CD4-positive, alpha-beta memory T cell (primary cell): ENCODE measurements at regions of chr3 and their contacts with region 1.

Region 1: DNA sequence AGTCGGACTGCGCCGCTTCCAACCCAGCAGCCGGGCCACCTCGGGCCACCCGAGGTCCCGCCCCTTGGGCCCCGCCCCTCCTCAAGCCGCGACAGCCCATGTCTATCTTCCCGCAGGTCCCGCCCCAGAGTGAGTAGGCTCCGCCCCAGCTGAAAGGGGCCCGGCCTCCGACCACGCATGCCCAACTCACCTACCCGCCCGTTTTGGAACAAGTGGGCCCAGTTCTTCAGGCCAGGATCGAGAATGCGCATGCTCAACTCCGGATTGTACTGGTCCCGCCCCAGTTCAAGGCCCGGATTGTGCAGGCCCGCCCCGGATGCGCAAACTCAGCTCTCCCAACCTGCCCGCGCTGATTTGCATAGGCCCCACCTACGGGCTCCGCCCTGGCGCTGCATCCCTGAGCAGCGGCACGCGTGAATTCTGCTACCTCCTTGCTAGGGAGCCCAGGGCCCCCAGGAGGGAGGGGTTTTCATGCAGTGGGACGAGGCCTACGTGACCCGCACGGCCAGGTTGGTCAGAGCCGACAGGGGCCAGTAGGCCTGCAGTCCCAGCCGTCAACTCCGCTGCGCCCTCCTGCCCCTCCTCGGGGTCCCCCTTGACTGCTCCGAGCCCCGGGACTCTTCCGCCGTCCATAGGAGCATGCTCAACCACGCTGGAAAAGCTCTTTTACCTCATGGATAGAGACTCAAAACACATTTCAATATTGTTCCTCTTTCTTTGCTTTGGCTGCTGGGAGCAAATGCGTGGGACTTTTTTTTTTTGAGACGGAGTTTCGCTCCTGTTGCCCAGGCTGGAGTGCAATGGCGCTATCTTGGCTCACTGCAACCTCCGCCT is at the start of gene PFKFB4:
- DNase-seq: peak; percentile 99 to 100 (median 100)
- H3K4me3 ChIP-seq: peak within 1 kb of the TSS; percentile 69 to 82
- H3K4me3 Mint-ChIP-seq: peak within 1 kb of the TSS; percentile 77 to 96 (median 87)
- H3K27ac ChIP-seq: peak within 1 kb of the TSS; percentile 39
- H3K27ac Mint-ChIP-seq: peak within 1 kb of the TSS; percentile 66 to 89 (median 78)
- H3K4me1 ChIP-seq: peaks cover 23% of the 10 kb centered on the region
- H3K4me1 Mint-ChIP-seq: peaks cover 5 to 22% (median 17%) of the 10 kb centered on the region in 4 donors
- H3K27me3 ChIP-seq: no peaks in the 10 kb centered on the region
- H3K27me3 Mint-ChIP-seq: no peaks in the 10 kb centered on the region
- total RNA-seq, gene PFKFB4: 2.6 to 2.7 TPM

Region 2: DNA sequence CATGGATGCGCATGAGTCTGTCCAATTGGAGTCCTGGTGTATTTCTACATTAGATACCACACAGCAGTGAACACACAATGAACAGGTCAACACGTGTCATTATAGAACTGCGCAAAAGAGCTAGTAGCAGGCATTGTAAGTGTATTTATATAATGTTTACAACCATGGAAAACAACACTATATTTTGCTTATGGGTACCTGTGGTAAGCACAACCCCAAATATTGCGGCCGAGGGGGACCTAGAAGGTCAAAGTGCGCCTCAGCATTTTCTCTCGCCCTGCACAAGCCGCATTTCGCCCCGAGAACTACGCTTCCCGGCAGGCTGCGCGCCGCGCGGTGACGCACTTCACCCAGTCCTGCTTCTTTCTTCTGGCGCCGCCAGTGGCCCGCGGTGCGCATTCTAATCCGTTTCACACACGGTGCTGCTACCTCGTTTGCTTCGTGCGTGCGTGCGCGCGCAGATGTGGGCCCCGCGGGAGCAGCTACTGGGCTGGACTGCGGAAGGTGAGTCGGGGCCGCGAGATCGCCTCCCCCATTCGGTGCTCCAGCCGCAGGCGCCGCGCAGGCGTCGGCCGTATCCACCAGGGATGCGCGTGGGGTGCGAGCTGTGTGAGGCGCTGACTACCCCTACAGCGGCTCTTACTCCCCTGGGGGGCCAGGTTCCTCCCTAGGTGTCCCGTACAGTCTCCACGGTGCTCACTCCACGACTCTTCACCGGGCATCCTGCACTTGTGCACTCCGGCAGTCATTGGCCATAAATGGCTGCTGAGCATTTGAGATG is 316.1 kb before region 1 on chr3 and contains the start of gene ZNF589:
- CTCF ChIA-PET with region 1: no interaction called
- POLR2A ChIA-PET with region 1: interaction called, 4 read pairs
- intact Hi-C with region 1: loop called (anchors 2 kb)
- DNase-seq: peak; percentile 90 to 96 (median 94)
- H3K4me3 ChIP-seq: peak within 1 kb of the TSS; percentile 64 to 99
- H3K4me3 Mint-ChIP-seq: peak within 1 kb of the TSS; percentile 87 to 97 (median 92)
- H3K27ac ChIP-seq: peak within 1 kb of the TSS; percentile 69
- H3K27ac Mint-ChIP-seq: peak within 1 kb of the TSS; percentile 87 to 96 (median 92)
- H3K4me1 ChIP-seq: peaks cover 30% of the 10 kb centered on the region
- H3K4me1 Mint-ChIP-seq: peaks cover 8 to 26% (median 11%) of the 10 kb centered on the region in 4 donors
- H3K27me3 ChIP-seq: no peaks in the 10 kb centered on the region
- H3K27me3 Mint-ChIP-seq: no peaks in the 10 kb centered on the region
- total RNA-seq, gene ZNF589: 49.4 to 58.6 TPM

Region 3: DNA sequence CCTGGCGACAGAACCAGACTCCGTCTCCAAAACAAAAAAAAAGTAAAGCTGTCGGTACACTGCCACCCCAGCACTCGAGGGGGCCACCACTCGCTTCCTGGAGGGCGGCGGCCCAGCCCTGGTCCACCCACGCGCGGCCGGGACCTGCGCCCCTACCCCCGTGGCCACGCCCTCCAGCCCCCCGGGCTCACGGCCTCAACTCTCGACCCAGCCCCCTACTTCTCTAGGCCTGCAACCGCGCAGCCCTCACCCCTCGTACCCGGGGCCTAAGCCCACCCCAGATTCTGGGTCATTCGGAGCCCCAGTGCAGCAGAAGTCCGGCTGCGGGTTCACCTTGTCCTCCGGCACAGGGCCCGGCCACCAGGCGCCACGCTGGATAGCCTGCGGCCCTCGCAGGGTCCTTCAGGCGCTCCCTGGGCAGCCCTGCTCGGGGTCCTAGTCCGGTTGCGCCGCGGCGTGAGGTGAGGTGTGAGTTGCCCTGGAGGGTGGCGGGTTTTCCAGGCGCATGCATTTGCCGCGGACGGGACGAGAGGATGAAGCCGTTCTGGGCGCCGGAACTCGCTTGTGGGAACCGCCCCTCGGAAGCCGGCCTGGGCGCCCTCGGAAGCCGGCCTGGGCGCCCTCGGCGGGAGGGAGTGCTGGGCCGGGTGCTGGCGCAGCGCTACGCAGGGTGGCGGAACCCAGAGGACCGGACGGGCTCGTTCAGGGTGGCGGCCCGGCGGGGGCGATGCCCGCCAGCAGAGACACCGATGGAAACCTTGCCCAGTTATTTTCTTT is 255.8 kb before region 1 on chr3:
- CTCF ChIA-PET with region 1: no interaction called
- POLR2A ChIA-PET with region 1: no interaction called
- intact Hi-C with region 1: loop called (anchors 1 kb)
- DNase-seq: peak; percentile 83 to 89 (median 85)
- H3K4me3 ChIP-seq: peak within 1 kb of the TSS; percentile 86 to 89
- H3K4me3 Mint-ChIP-seq: peak within 1 kb of the TSS; percentile 91 to 96 (median 94)
- H3K27ac ChIP-seq: peak within 1 kb of the TSS; percentile 90
- H3K27ac Mint-ChIP-seq: peak within 1 kb of the TSS; percentile 78 to 99 (median 97)
- H3K4me1 ChIP-seq: peaks cover 20% of the 10 kb centered on the region
- H3K4me1 Mint-ChIP-seq: peaks cover 25 to 57% (median 32%) of the 10 kb centered on the region in 4 donors
- H3K27me3 ChIP-seq: no peaks in the 10 kb centered on the region
- H3K27me3 Mint-ChIP-seq: no peaks in the 10 kb centered on the region

Region 4: GRCh38 chr3:48507351-48508061 is 49.5 kb before region 1 on chr3:
- CTCF ChIA-PET with region 1: interaction called, 7 read pairs
- POLR2A ChIA-PET with region 1: interaction called, 13 read pairs
- intact Hi-C with region 1: no loop called
- DNase-seq: peak; percentile 75 to 84 (median 77)
- H3K4me3 ChIP-seq: no peak overlapping the region
- H3K4me3 Mint-ChIP-seq: peak overlapping the region in 7 of 8 donors; percentile 42 to 77 (median 64)
- H3K27ac ChIP-seq: peak overlapping the region; percentile 27
- H3K27ac Mint-ChIP-seq: peak overlapping the region; percentile 83 to 92 (median 86)
- H3K4me1 ChIP-seq: peaks cover 62% of the 10 kb centered on the region
- H3K4me1 Mint-ChIP-seq: peaks cover 36 to 62% (median 50%) of the 10 kb centered on the region in 4 donors
- H3K27me3 ChIP-seq: no peaks in the 10 kb centered on the region
- H3K27me3 Mint-ChIP-seq: no peaks in the 10 kb centered on the region

Region 5: GRCh38 chr3:48535578-48535977 is 21.4 kb before region 1 on chr3:
- CTCF ChIA-PET with region 1: no interaction called
- POLR2A ChIA-PET with region 1: no interaction called
- intact Hi-C with region 1: no loop called
- DNase-seq: no peak
- H3K4me3 ChIP-seq: no peak overlapping the region
- H3K4me3 Mint-ChIP-seq: no peak overlapping the region
- H3K27ac ChIP-seq: no peak overlapping the region
- H3K27ac Mint-ChIP-seq: peak overlapping the region in 1 of 7 donors; percentile 55
- H3K4me1 ChIP-seq: no peaks in the 10 kb centered on the region
- H3K4me1 Mint-ChIP-seq: peaks cover 0 to 7% (median 0%) of the 10 kb centered on the region in 4 donors
- H3K27me3 ChIP-seq: no peaks in the 10 kb centered on the region
- H3K27me3 Mint-ChIP-seq: no peaks in the 10 kb centered on the region

Region 6: DNA sequence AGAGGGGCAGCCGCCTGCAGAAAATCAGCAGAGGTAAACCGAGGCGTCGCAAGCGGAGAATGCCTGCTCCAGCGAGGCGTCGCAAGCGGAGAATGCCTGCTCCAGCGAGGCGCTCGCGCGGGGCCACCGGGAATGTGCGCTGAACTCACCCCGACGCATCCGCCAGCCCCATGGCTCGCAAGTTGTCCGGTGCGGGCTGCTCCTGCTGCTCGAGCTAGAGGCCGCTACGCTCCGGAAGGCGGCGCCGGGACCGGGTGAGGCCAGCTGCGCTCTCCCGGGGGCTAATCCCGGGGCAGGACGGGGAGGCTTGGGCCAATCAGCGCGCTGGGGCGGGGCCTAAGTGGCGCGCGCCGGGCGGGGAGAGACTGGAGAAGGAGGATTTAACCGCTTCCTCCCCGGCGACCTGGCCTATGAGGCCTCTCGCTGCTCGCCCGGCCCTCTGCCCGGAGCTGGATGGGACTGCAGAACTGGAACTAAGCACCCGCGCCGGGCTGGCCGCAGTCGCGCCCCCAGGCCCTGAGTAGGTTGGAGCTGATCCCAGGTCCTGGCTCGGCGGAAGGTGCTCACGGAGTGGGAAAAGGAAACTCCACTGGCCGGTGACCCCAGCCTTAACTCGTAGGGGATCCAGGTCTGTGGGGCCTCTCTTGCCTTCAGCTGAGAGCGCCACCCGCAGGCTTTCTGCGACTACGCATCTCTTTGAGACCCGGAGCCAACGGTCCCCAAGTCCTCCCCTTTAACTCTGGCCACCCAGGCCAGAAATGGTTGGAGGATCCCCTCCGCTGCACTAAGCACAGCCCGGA is 78.4 kb after region 1 on chr3 and contains the start of gene SLC26A6:
- CTCF ChIA-PET with region 1: interaction called, 3 read pairs
- POLR2A ChIA-PET with region 1: interaction called, 8 read pairs
- intact Hi-C with region 1: loop called (anchors 1 kb)
- DNase-seq: peak; percentile 86 to 92 (median 89)
- H3K4me3 ChIP-seq: peak within 1 kb of the TSS; percentile 57 to 91
- H3K4me3 Mint-ChIP-seq: peak within 1 kb of the TSS; percentile 86 to 92 (median 89)
- H3K27ac ChIP-seq: peak within 1 kb of the TSS; percentile 60
- H3K27ac Mint-ChIP-seq: peak within 1 kb of the TSS; percentile 58 to 87 (median 74)
- H3K4me1 ChIP-seq: peaks cover 18% of the 10 kb centered on the region
- H3K4me1 Mint-ChIP-seq: peaks cover 3 to 25% (median 15%) of the 10 kb centered on the region in 4 donors
- H3K27me3 ChIP-seq: no peaks in the 10 kb centered on the region
- H3K27me3 Mint-ChIP-seq: peaks cover 0 to under 1% of the 10 kb centered on the region in 2 donors
- total RNA-seq, gene SLC26A6: 31.6 to 32.4 TPM

Region 7: DNA sequence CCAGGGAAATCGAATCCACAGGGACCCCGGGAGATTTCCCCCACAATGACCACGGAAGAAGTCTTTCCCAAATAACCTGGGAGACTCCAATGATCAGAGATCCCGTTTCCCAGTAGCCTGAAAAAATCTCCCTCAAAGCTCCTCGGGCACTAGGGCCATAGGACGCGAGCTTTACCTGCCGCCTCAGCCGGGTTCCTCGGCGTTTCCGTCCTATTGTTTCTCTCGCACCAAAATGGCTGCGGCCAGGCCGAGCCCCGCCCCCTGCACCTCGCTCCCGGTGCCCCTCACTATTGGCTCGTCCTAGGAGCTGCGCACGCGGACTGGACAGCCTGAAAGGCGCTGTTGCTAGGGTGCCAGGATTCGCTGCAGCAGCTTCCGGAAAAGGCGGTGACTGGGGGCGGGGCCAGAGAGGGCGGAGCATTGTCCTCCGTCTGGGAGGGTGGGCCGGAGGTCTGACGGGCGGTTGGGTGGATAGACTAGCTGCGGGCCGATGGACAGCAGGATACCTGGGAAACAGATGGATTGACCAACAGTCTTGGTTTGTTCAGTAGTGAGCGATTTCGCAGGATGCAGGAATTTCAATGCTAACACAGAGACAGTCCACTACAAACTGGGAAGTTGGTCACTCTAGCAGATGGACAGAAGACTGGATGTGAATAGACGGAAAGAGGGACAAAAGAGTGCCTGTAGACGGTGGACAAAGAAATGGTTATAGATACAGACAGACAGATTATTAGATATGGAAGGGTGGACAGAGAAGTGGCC is 160.2 kb after region 1 on chr3 and contains the start of gene IP6K2:
- CTCF ChIA-PET with region 1: no interaction called
- POLR2A ChIA-PET with region 1: no interaction called
- intact Hi-C with region 1: loop called (anchors 1 kb)
- DNase-seq: peak; percentile 95 to 99 (median 97)
- H3K4me3 ChIP-seq: peak within 1 kb of the TSS; percentile 90 to 98
- H3K4me3 Mint-ChIP-seq: peak within 1 kb of the TSS; percentile 98 to 100 (median 99)
- H3K27ac ChIP-seq: peak within 1 kb of the TSS; percentile 91
- H3K27ac Mint-ChIP-seq: peak within 1 kb of the TSS; percentile 88 to 99 (median 99)
- H3K4me1 ChIP-seq: peaks cover 44% of the 10 kb centered on the region
- H3K4me1 Mint-ChIP-seq: peaks cover 28 to 51% (median 37%) of the 10 kb centered on the region in 4 donors
- H3K27me3 ChIP-seq: no peaks in the 10 kb centered on the region
- H3K27me3 Mint-ChIP-seq: no peaks in the 10 kb centered on the region
- total RNA-seq, gene IP6K2: 84.5 to 91.8 TPM